Right ventricle myocardium inferior (tissue), 1 donor: ENCODE measurements at regions of chr6 and their contacts with region 1.

Region 1: DNA sequence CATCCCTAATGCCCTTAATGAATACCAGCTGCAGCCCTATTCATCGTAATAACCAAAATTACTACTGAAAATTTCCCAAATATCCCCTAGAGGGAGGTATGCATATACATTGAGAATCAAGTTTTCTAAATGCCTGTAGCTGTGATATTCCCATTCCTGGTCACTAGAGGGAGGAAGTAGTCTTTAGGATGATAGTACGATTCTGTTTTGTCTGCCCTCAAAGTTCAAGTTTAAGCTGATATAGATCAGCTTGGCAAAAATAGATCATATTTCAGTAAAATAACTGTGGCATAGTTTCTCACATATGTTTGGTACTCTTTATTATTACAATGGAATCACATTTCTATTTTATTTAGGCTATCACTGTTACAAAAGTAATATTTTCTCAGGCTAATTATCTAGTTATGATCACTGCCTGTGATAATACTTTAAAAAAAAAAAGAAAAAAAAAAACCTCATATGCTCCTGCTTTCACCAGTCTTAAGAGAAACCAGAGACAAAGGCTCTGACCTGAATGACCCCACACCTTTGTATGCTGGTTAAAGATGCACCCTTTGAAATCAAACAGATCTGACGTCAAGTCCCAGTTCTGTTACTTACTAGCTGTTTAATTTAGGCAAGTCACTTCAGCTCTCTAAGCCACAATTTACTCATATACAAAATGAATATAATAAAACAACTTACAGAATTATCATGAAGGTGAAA is 11.0 kb downstream of the TSPYL1 start:
- DNase-seq: no peak
- ATAC-seq: peak; percentile 39

Region 2: DNA sequence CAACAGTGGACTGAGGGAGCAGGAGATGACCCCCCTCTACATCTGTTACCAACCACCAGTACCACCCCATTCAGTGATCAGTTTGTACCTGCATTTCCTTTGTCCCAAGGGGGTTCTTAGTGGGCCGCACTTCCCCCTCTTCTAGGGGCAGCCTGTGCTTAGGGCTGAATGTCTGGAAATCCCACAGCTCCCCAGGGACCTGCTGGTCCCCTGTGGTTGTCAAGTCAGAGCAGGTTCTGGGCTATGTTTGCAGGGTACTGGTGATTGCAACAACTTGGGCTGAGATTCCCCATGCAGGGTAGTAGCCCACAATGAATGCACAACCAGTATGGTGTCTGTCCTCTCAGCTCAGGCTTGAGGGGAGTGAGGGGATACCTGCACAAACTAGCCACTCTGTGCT is 103.1 kb before region 1 on chr6:
- intact Hi-C with region 1: no loop called
- DNase-seq: no peak
- ATAC-seq: no peak

Region 3: GRCh38 chr6:116561377-116562018 is 292.8 kb after region 1 on chr6:
- intact Hi-C with region 1: loop called (anchors 5 kb)
- DNase-seq: peak; percentile 69
- ATAC-seq: peak; percentile 44